Panc1 (cell line): ENCODE measurements at regions of chr2 and their contacts with region 1.

Region 1: DNA sequence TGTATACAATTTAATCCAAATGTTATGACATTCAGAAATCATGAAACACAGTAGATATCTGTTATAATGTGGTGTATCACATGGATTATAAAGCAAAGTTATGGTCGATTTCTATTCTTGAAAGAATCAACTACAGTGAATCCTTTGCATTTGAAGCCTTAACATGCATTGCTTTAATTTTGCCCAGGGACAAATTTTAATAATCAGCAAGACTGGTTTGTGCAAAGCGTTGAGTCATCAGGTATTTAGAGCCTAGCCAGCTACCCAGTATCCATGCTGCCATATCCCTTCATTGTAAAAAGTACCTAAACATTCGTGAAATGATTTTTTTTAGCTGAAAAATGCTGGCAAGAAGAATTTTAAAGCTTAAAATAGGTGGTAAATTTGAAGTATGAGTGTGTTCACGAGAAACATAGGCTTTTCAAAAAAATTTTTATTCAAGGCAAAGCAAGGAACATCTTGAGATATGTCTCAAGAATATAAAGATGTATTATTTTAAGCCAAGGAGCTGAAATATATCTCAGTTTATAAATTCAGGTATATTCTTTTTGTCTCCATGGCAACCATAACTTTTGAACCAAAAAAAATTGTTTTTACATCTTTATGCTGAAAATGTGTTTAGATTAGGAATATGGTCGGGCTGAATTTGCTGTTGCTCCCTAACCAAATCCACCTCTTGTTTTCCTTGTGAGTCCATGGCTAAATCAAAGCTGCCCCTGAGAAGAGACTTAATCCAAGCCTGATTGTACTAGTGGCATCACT is 8.7 kb upstream of the SPDYA start:
- DNase-seq: no peak
- ATAC-seq: no peak
- H3K4me3 ChIP-seq: no peak overlapping the region
- H3K27ac ChIP-seq: no peak overlapping the region
- H3K4me1 ChIP-seq: no peaks in the 10 kb centered on the region
- H3K27me3 ChIP-seq: no peaks in the 10 kb centered on the region
- CTCF ChIP-seq: no peak

Region 2: GRCh38 chr2:28780496-28780895 is 21.4 kb before region 1 on chr2:
- CTCF ChIA-PET with region 1: no interaction called
- POLR2A ChIA-PET with region 1: no interaction called
- in situ Hi-C with region 1: no loop called
- intact Hi-C with region 1: no loop called
- DNase-seq: no peak
- ATAC-seq: no peak
- H3K4me3 ChIP-seq: no peak overlapping the region
- H3K27ac ChIP-seq: no peak overlapping the region
- H3K4me1 ChIP-seq: no peaks in the 10 kb centered on the region; the same call in none of the 2 replicates
- H3K27me3 ChIP-seq: no peaks in the 10 kb centered on the region
- CTCF ChIP-seq: no peak

Region 3: DNA sequence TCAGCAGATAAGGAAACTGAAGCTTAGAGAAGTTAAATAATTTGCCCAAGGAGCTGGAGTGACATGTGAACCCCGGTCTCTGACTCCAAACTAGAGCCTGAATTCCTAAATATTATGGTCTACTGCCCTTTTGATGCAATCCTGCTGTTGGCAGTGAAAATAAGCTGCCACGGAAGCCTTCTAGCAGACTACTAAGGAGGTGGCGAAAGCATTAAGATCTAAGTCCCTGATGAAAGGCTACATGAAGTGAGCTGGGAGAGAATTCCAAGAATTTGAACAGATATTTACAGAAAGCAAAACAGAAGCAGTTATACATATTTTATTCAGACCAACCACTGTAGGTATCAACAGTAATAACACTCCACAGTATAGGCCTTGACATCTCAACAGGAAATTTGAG is 40.1 kb after region 1 on chr2:
- CTCF ChIA-PET with region 1: no interaction called
- POLR2A ChIA-PET with region 1: no interaction called
- in situ Hi-C with region 1: loop called (anchors 5 kb)
- intact Hi-C with region 1: no loop called
- DNase-seq: no peak
- ATAC-seq: no peak
- H3K4me3 ChIP-seq: no peak overlapping the region
- H3K27ac ChIP-seq: no peak overlapping the region
- H3K4me1 ChIP-seq: no peaks in the 10 kb centered on the region
- H3K27me3 ChIP-seq: no peaks in the 10 kb centered on the region
- CTCF ChIP-seq: no peak